ENCODE measurements at regions of chr11 and their contacts with region 1.

Region 1: GRCh38 chr11:74726547-74727182 is 4.6 kb downstream of the CHRDL2 start:
- DNase-seq: peak; percentile 49 to 96 (median 70)

Region 2: DNA sequence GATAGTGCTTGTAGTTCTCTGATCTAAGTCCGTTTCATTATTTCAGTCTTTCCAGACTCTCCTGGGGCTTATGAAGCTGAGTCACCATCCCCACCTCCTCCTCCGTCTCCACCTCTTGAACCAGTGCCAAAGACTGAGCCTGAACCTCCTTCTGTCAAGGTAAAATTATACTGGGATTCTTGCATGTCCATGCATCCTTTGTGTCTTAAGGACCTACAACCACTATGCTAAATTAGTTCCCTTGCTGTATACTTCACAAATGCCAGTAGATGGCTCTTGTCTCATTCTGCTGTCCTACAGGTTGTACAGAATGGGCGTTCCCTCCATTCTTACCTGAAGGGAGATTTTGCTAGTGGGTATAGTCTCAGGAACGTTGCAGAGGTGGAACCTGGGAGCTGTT is 92.1 kb before region 1 on chr11:
- intact Hi-C with region 1: loop called (anchors 10 kb)
- DNase-seq: no peak

Region 3: DNA sequence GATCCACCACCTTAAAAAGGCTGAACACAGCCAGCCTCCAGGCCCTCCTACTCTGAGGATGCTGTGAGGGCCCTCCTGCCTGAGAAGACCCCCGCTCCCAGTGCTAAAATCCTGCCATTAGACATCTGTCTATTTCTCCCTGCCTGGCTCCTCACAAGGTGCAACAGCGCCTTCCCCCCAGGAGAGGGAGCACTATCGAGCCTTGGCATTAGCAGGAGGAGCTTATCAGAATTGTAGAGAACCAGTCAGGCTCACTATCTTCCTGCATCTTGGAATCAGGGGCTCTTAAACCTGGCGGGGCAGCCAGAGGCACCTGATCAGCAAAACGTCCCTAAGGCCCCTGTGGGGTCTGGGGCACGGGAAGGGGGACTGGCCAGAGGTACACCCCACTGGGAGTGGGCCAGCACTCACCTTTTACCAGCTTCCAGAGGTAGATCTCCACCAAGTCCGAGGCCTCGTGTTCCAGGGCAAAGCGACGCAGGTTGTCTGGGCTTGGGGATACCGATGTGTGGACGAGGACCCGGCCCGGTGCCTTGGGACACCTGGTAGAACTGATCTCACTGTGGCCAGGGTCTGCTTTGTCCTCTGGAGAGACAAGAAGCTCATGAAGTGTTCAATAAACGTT is 24.2 kb before region 1 on chr11:
- intact Hi-C with region 1: loop called (anchors 1 kb)
- DNase-seq: peak in 9 of 10 donors; percentile 36 to 95 (median 67)

Measured in posterior cingulate gyrus (tissue), 11 donors.